ENCODE measurements at regions of chr10 and their contacts with region 1.

Region 1: DNA sequence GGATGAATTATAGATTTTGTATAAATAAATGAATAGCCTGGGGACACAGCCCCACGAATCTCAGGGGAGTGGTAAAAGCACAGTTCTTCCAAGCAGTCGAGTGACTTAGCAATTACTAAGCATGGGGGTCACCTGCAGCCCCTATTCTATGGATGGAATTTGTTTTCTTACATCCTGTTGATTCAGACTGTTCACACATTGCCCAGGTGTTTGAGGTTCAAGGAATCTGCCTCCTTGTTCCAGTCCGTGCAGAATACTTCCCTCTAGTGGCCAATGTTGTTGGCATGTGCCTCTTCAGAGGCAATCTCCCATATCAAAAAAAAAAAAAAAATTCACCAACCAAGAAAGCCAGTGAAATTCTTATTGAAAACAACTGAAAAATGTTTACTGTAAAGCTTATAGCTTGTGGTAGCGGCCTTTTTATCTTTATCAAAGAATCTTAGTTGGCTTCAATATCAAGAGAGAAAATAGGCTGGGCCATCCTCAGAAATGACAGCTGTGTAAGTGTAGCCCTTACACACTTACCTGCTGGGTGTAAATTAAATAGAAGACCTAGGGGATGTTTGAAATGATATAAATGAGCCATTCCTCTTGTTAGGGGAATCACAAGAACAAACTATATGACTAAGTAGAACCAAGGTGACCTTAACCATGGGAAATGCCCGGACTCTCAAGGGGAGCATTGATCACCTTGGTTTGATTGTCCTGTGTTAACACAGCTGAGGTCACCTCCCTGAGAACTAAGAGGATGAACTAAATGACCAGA is 7.8 kb downstream of the LIPM start:
- DNase-seq: peak; percentile 48
- H3K4me3 Mint-ChIP-seq: no peak overlapping the region
- H3K27ac Mint-ChIP-seq: no peak overlapping the region
- H3K4me1 Mint-ChIP-seq: peaks cover 13% of the 10 kb centered on the region
- H3K27me3 Mint-ChIP-seq: no peaks in the 10 kb centered on the region

Region 2: GRCh38 chr10:88565072-88565471 is 245.3 kb before region 1 on chr10:
- CTCF ChIA-PET with region 1: interaction called, 6 read pairs
- intact Hi-C with region 1: loop called (anchors 1 kb)
- DNase-seq: no peak
- H3K4me3 Mint-ChIP-seq: no peak overlapping the region
- H3K27ac Mint-ChIP-seq: no peak overlapping the region
- H3K4me1 Mint-ChIP-seq: no peaks in the 10 kb centered on the region
- H3K27me3 Mint-ChIP-seq: no peaks in the 10 kb centered on the region

Region 3: DNA sequence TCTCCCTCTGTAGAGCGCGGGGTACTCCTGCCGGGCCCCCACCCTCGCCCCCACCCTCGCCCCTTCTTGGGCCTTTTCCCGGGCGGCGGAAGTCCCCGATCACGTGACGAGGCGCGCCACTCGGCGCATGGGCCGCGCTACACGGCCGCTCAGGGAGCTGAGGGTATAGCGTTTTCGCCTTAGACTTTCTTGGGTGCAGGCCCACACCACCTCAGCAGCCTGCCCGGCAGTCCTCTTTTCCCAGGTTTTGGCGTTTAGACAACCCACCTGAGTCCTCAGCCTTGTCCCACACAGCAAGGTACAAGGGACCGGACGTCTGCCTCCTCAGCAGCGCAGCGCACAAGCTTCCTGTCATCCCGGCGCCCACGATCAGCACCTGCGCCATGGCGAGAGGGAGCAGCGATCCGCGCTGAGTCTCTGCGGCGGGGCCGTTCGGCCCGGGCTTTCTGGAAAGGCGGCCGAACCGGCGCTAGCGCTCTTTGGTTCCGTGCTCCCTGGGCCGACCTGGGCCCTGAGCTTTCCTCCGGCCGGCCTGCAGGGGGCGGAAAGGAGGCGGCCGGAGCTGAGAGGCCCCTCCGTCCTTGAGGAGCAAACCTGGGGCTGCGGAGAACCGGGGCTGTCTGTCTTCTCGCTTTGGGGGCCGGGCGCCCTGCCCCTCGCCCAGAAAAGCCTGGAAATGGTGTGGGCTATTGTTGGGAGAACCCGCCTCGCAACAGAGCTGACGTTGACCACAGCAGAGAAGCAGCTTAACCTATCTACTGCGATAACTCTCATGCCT is 227.4 kb before region 1 on chr10 and contains the start of gene RNLS:
- CTCF ChIA-PET with region 1: interaction called, 7 read pairs
- intact Hi-C with region 1: loop called (anchors 5 kb)
- DNase-seq: peak; percentile 76
- H3K4me3 Mint-ChIP-seq: peak within 1 kb of the TSS; percentile 82
- H3K27ac Mint-ChIP-seq: peak within 1 kb of the TSS; percentile 89
- H3K4me1 Mint-ChIP-seq: peaks cover 11% of the 10 kb centered on the region
- H3K27me3 Mint-ChIP-seq: peaks cover 5% of the 10 kb centered on the region
- total RNA-seq, gene RNLS: 4.0 to 4.4 TPM

Region 4: DNA sequence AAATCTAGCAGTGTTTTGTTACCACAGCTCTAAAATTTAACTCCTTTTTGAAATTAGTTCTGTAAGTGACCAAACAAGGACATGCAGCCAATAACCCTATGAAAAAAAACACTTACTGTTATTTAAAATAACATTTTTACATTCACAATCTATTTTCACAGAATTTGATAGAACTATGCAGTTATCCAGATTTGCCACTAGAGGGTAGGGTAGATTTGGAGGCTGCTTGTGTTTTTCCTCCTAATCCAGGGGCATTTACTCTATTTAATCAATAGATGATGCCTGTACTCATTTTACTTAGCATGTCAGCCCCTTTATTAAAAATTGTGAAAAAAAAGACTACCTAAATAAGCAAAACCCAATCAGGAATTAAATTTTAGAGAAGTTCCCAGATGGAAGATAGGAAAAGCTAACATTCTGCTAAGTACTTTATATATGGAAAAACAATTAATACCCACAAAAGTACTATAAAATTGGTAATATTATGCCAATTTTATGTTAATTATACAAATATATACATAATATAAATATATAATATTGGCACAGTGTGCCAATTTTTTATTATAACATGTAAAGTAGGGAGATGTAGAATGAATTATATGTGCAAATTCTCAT is 122.4 kb before region 1 on chr10:
- CTCF ChIA-PET with region 1: interaction called, 31 read pairs
- intact Hi-C with region 1: loop called (anchors 1 kb)
- DNase-seq: no peak
- H3K4me3 Mint-ChIP-seq: no peak overlapping the region
- H3K27ac Mint-ChIP-seq: no peak overlapping the region
- H3K4me1 Mint-ChIP-seq: no peaks in the 10 kb centered on the region
- H3K27me3 Mint-ChIP-seq: peaks cover 8% of the 10 kb centered on the region

Region 5: DNA sequence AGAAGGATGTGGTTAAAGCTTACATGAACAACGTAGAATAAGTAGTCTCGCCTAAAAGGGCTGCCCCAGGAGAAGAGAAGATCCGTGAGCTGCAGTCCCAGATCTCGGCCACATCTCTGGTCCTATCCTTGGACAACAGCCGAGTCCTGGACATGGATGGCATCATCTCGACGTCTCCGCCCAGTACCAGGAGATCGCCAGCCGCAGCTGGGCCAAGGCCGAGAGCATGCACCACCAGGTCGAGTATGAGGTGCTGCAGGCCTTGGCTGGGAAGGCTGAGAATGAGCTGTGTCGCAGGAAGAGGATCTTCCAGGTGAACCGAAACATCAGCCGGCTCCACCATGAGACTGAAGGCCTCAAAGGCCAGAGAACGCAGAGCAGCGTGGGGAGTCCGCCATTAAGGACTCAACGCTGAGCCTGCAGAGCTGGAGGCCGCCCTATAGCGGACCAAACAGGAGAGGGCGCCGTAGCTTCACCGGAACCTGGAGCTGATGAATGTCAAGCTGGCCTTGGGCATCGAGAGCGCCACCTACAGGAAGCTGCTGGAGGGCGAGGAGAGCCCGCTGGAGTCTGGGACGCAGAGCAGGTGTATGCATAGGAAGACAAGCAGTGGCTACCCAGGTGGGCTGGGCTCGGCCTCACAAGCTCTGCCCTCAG is 82.1 kb before region 1 on chr10:
- CTCF ChIA-PET with region 1: interaction called, 18 read pairs
- intact Hi-C with region 1: no loop called
- DNase-seq: peak; percentile 68
- H3K4me3 Mint-ChIP-seq: no peak overlapping the region
- H3K27ac Mint-ChIP-seq: no peak overlapping the region
- H3K4me1 Mint-ChIP-seq: peaks cover 2% of the 10 kb centered on the region
- H3K27me3 Mint-ChIP-seq: peaks cover 7% of the 10 kb centered on the region

Region 6: GRCh38 chr10:88828310-88828709 is 17.9 kb after region 1 on chr10:
- CTCF ChIA-PET with region 1: interaction called, 10 read pairs
- intact Hi-C with region 1: no loop called
- DNase-seq: no peak
- H3K4me3 Mint-ChIP-seq: no peak overlapping the region
- H3K27ac Mint-ChIP-seq: no peak overlapping the region
- H3K4me1 Mint-ChIP-seq: peaks cover 47% of the 10 kb centered on the region
- H3K27me3 Mint-ChIP-seq: no peaks in the 10 kb centered on the region